ENCODE measurements at regions of chr4 and their contacts with region 1.

Region 1: DNA sequence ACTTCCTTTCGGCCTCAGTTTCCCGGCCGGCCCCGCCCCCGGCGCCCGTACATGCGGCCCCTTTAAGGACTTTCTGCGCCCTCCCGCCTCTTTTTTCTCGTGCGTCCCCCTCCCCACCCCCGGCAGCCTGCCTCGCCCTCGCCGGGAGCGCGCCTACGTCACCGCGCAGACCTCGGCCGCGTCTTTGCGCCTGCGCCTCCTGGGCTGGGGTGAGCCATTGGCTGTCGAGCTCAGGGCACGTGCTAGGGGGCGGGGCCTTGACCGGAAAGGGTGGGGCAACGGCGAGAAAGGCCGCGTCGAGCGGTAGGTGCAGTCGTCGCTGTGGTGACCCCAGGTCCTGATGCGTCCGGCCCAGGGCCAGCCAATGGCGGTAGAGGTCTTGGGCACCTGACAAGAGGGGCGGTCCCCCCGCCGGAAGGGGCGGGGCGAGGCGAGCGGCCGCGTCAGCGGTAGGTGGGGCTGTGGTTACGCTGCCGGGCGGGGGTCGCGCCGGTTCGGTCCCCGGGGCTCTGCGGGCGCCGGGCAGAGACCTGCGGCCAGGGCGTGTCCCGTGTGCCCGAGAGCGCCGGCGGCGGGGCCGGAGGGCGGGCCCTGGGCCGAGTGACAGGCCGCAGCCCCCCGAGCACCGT is at the start of gene UVSSA:
- DNase-seq: peak; percentile 100
- H3K4me3 ChIP-seq: peak within 1 kb of the TSS; percentile 85
- CTCF ChIP-seq: no peak
- POLR2A ChIP-seq: no peak
- total RNA-seq, gene UVSSA: 18.2 to 57.4 (median 25.7) TPM

Region 2: DNA sequence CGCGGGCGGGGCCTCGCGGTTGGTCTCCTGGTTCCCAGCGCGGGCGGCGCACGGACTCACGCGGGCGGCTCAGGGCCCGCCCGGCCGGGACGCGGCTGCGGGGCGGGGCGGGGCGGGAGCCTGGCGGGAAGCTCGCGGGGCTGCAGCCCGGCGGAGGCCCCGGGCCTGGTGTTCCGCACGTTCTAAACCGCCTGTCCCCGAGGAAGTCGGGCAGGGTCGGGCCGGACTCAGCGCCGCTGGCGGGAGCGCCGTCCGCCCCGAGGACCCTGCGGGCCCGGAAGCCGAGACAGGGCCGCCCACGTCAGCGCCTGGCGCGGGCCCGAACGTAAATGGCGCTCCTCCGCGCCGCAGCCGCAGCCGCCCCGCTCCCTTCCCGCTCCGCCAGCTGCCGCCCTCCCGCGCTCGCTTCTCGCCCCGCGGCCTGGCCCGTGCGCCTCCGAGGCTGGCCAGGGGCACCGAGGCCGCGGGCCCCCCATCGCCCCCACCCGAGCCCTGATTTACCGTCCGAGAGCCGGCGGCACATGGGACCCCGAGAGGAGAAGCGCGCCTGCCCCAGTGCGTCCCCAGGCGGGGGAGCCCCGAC is 97.7 kb before region 1 on chr4:
- intact Hi-C with region 1: loop called (anchors 5 kb)
- DNase-seq: peak in 1 of 2 donors; percentile 96
- H3K4me3 ChIP-seq: peak overlapping the region; percentile 83
- CTCF ChIP-seq: no peak
- POLR2A ChIP-seq: no peak

Measured in lower leg skin (tissue), 4 donors.